ENCODE measurements at regions of chr9 and their contacts with region 1.

Region 1: DNA sequence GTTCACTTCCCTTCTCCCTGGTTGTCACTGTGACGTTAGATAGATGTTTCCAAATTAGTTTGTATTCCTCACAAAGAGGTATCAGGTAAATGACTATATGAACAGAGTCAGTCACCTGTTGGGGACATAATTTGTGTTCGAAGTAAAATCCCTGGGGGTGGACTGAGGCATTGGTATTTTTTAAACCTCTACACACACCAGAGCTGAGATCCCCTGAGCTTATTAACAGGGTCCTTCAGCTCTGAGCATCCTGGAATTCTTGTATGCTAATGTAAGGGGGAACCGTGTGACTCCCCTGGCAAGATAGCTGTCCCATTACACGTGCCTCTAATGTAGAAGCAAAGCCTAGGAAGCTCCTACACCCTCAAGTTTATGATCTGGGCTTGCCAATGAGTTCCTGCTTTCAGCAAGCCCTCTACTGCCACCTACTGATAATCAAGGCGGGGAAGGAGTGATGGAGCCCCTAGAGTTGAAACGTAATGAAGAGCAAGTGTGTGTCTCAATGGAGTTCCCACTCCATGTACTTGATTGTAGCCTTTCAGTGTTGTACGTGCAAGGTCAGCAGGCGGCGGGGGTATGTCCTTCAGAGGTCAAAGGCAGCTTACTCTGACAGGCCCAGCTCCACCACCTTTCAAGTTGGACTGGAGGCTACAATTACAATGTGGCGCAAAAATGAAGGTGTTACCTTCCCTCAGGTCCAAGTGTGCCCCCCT is 14.4 kb downstream of the PRKACG start:
- DNase-seq: peak; percentile 58
- H3K4me3 Mint-ChIP-seq: no peak overlapping the region
- H3K27ac Mint-ChIP-seq: peak overlapping the region; percentile 61
- H3K4me1 Mint-ChIP-seq: peaks cover 38% of the 10 kb centered on the region
- H3K27me3 Mint-ChIP-seq: peaks cover 2% of the 10 kb centered on the region

Region 2: DNA sequence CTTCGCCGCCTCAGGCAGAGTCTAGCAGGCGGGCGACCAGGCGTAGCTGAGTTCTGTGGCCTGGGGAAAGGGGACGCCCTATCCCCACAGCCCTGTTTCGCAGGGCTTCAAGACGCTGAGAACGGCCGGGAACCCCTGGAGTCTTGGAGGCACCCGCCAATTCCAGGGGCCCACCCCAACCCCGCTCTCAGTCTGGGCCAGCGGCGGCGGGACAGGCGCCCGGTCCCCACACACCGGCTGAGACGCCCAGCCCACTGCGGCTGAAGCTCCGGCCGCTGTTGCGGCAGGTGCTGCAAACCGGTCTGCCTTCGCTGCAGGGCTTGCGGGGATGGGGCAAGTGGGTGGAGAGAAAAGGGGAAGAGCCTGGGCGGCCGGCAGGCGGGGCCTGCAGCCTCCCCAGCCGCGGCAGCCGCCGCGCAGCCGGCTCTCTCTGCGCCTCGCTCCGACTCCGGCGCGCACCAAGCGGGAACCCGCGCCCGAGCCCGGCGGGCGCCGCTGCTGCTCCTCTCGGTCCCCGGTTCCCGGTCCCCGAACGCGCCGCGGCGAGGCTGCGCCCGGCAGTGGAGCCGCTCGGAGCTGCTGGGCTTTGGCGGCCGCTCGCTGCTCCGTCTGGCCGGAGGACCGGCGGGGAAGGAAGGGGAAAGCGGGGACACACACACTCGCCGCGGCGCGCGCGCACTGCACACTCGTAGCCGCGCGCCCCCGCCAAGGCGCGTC is 294.6 kb before region 1 on chr9 and contains the start of gene PIP5K1B:
- intact Hi-C with region 1: loop called (anchors 1 kb)
- DNase-seq: peak; percentile 44
- H3K4me3 Mint-ChIP-seq: peak within 1 kb of the TSS; percentile 85
- H3K27ac Mint-ChIP-seq: peak within 1 kb of the TSS; percentile 81
- H3K4me1 Mint-ChIP-seq: peaks cover 27% of the 10 kb centered on the region
- H3K27me3 Mint-ChIP-seq: peaks cover 57% of the 10 kb centered on the region
- total RNA-seq, gene PIP5K1B: 77.4 and 78.5 TPM in 2 replicates

Region 3: GRCh38 chr9:68802525-68803015 is 197.0 kb before region 1 on chr9:
- intact Hi-C with region 1: loop called (anchors 1 kb)
- DNase-seq: peak; percentile 31
- H3K4me3 Mint-ChIP-seq: no peak overlapping the region
- H3K27ac Mint-ChIP-seq: no peak overlapping the region
- H3K4me1 Mint-ChIP-seq: peaks cover 18% of the 10 kb centered on the region
- H3K27me3 Mint-ChIP-seq: peaks cover 3% of the 10 kb centered on the region

Region 4: GRCh38 chr9:68895741-68896478 is 103.6 kb before region 1 on chr9:
- intact Hi-C with region 1: loop called (anchors 5 kb)
- DNase-seq: no peak
- H3K4me3 Mint-ChIP-seq: peak overlapping the region; percentile 70
- H3K27ac Mint-ChIP-seq: peak overlapping the region; percentile 84
- H3K4me1 Mint-ChIP-seq: peaks cover 51% of the 10 kb centered on the region
- H3K27me3 Mint-ChIP-seq: no peaks in the 10 kb centered on the region

Region 5: DNA sequence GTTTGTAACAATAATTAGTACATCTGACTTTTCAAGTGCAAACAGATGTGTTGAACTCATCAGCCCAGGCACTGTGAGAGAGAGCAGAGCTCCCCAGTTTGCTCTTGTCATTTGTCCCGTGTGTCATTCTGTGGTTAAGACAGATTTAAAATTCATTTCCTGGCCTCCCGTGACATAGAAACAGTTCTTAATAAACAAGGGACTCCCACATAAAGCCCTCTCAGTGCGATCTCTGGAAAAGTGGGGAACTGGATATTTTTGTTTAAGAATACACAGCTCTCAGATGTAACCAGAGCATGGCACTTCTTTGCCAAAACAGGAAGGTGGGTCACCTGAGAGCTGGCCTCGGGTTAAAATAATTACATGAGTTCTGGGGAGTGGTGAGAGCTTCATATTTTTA is 44.2 kb before region 1 on chr9:
- intact Hi-C with region 1: loop called (anchors 1 kb)
- DNase-seq: no peak
- H3K4me3 Mint-ChIP-seq: peak overlapping the region; percentile 54
- H3K27ac Mint-ChIP-seq: peak overlapping the region; percentile 91
- H3K4me1 Mint-ChIP-seq: peaks cover 47% of the 10 kb centered on the region
- H3K27me3 Mint-ChIP-seq: peaks cover 6% of the 10 kb centered on the region

Region 6: DNA sequence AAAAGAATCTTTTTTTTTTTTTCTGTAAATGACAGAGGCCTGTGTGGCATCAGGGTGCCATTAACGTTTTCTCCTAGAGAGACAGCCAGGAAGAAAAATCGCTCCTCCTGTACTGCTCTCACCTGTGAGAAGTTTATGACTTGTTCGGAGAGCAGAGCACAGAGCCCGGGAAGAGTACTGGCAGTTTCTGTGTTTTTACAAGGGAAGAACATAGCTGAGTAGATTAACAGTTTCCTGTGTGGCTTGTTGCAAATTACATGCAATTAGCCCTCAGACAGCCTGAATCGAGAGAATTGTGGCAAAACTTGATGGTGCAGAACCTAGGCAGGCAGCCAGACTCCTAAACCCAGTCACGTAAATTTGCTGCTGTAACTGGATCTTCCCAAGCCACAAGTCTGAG is 17.8 kb before region 1 on chr9:
- intact Hi-C with region 1: no loop called
- DNase-seq: no peak
- H3K4me3 Mint-ChIP-seq: no peak overlapping the region
- H3K27ac Mint-ChIP-seq: peak overlapping the region; percentile 21
- H3K4me1 Mint-ChIP-seq: peaks cover 71% of the 10 kb centered on the region
- H3K27me3 Mint-ChIP-seq: peaks cover 2% of the 10 kb centered on the region

Region 7: GRCh38 chr9:69027355-69028096 is 28.0 kb after region 1 on chr9:
- intact Hi-C with region 1: loop called (anchors 1 kb)
- DNase-seq: peak; percentile 32
- H3K4me3 Mint-ChIP-seq: no peak overlapping the region
- H3K27ac Mint-ChIP-seq: peak overlapping the region; percentile 18
- H3K4me1 Mint-ChIP-seq: peaks cover 51% of the 10 kb centered on the region
- H3K27me3 Mint-ChIP-seq: peaks cover 1% of the 10 kb centered on the region